Left ventricle myocardium superior (tissue), 1 donor: ENCODE measurements at regions of chr5 and their contacts with region 1.

Region 1: DNA sequence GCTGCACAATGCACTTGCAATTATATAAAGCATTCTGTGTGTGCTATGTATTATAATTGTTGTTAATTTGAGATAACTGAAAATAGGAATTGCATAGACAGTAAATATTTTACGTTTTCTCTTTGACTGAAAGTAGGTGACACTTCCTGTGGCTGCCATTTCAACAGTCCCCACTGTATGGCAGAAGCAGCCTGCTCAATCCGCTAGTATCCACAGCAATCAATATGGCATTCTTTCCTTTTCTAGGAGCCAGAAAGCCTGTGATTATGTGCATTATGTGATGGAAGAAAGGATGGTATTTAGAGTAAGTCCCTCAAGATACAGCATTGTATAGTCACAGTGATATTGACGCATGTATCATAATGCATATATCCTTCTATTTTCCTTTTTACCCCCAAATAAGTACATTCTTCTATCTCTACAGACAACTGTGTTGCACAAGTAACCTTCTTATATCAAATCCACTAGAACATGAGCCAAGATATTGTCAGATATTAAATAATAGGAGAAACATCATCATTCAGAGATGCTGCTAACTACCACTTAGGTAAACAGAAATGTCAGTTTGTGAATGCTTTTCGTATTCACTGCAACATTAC is 59.7 kb downstream of the CARTPT start:
- DNase-seq: no peak
- ATAC-seq: peak; percentile 66

Region 2: DNA sequence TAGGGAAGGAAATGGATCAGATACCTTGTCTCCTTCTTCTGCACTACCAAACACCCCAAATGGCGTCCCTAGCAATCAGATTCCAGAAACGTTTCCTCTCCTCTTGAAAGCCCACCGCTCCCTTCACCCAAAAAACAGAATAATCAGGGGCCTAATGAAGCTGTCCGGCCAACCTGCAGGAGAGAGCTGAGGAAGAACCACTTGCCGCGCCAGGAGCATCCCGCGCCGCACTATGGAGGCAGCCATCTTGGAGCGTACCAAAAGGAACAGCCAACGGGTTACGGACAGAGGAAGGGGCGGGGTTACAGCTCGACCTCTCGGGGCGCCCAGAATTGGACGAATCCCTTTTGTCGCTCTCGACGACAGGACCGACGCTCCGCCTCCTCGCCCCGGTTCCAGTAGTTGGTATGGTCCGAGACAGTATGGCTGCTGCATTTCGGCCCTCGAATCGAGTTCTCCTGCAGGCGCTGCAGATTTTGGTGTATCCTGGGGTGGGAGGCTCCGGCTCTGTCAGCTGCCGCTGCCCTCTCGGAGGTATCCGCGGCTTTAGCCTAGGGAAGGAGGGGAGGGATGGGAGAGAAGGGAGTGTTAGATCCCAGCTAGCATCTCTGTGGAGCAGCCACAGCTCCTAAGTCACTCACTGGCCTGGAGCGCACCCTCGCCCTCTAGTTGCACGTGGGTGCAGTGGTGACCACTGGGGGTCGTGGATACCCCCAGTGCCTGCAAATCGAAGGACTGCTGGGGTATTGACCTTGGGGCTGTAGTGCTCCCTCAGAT is 541.4 kb after region 1 on chr5 and contains the starts of genes MRPS27 and PTCD2:
- intact Hi-C with region 1: loop called (anchors 10 kb)
- DNase-seq: peak; percentile 96
- ATAC-seq: peak; percentile 100
- total RNA-seq, gene MRPS27: 80.1 TPM
- total RNA-seq, gene PTCD2: 17.7 TPM